Vagina (tissue), 2 donors: ENCODE measurements at regions of chr4 and their contacts with region 1.

Region 1: DNA sequence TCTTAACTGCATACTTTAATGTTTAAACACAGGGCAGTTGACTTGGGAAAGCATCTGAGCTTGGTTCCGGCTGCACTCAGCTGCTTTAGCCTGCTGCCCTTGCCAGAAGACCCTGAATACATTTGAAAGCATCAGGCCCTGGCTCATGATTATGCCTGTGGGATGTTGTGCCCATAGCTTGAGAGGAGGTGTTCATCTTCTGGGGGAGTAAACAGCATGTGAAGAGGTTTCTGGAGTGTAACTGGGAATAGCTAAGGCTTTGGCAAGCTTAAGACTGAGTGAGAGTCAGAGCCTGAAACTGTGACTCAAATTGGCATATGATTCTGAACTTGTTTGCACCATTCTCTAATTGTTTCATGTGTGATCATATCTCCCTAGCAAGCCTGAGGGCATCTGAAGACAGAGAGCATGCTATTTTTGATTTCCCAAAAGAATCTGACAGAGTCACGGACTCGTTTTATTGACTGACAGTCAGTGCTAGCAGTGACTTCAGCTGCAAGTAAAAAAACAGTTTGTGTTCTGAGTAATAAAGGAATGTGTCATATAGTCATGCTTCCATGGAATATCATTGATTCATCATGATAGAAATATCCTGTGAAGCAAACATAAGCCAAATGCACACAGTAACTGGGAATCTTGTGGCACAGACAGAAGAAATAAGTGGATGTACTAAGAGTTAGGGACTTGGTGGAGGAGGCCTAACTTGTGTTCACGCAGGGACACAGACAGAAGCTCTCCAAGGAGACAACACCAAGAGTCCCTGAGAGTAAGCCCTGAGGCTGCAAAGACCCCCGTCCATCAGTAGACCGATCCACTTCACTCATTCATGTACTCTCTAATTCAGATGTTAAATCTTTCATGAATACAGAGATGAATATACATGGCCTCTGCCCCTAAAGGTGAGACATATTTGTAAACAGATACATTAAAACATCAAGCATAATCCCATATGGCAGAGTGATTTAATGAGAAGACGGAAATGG is 100.7 kb downstream of the SYNPO2 start:
- DNase-seq: no peak
- H3K4me3 ChIP-seq: no peak overlapping the region
- H3K27ac ChIP-seq: peak overlapping the region; percentile 82
- H3K4me1 ChIP-seq: peaks cover 43% of the 10 kb centered on the region
- H3K27me3 ChIP-seq: no peaks in the 10 kb centered on the region
- CTCF ChIP-seq: no peak
- POLR2A ChIP-seq: no peak

Region 2: DNA sequence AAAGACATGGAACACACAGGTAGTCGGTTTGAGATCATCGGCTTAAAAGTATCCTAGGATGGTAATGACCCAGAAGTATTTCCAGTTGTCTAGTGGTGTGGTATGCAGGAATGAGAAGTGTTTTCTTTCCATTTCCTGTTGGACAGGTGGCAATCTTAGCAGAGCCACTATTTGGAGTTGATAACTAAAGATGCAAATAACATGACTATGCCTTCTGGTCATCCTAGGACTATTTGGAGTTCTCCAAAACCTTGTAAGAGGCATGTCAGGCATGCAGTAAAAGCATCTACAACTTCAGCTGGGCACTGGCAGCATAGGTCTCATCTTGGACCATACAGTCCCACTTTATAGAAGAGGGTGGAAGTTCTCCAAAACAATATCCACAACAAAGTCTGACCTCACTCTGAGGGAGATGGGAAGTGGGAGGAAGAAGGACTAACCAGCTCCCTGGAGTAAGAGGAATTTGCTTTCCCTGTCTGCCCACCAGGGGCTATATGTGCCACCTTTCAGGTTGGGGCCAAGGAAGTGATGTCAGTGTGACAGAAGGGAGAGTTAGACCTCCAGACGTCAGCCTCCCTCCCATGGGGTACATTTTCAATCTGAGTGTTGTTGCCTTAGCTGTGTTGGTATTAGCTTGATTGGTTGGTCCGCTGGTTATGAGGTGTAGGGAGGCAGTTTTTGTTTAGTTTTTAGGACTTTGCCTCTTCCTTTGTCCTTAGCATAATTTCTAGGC is 45.1 kb after region 1 on chr4:
- intact Hi-C with region 1: loop called (anchors 5 kb)
- DNase-seq: no peak
- H3K4me3 ChIP-seq: no peak overlapping the region
- H3K27ac ChIP-seq: peak overlapping the region; percentile 44
- H3K4me1 ChIP-seq: peaks cover 14% of the 10 kb centered on the region
- H3K27me3 ChIP-seq: no peaks in the 10 kb centered on the region
- CTCF ChIP-seq: no peak
- POLR2A ChIP-seq: no peak

Region 3: GRCh38 chr4:120049732-120050494 is 1060.5 kb after region 1 on chr4:
- intact Hi-C with region 1: loop called (anchors 5 kb)
- DNase-seq: peak in 1 of 2 donors; percentile 90
- H3K4me3 ChIP-seq: peak overlapping the region; percentile 22 to 23
- H3K27ac ChIP-seq: peak overlapping the region; percentile 70
- H3K4me1 ChIP-seq: no peaks in the 10 kb centered on the region
- H3K27me3 ChIP-seq: no peaks in the 10 kb centered on the region
- CTCF ChIP-seq: peak; percentile 64 to 86 (median 75)
- POLR2A ChIP-seq: no peak